T-cell (primary cell): ENCODE measurements at regions of chr6 and their contacts with region 1.

Region 1: GRCh38 chr6:30626484-30627366 is at the start of gene ATAT1:
- DNase-seq: peak; percentile 76 to 95 (median 87)
- ATAC-seq: peak; percentile 99 to 100 (median 99)
- H3K4me3 ChIP-seq: peak within 1 kb of the TSS; percentile 54 to 63
- H3K4me3 Mint-ChIP-seq: peak within 1 kb of the TSS; percentile 84 to 89 (median 87)
- H3K27ac ChIP-seq: peak within 1 kb of the TSS; percentile 81
- H3K27ac Mint-ChIP-seq: peak within 1 kb of the TSS; percentile 94
- H3K4me1 ChIP-seq: peaks cover 7 to 18% of the 10 kb centered on the region in 2 experiments
- H3K4me1 Mint-ChIP-seq: peaks cover 25 to 27% (median 26%) of the 10 kb centered on the region in 3 donors
- H3K27me3 ChIP-seq: no peaks in the 10 kb centered on the region
- H3K27me3 Mint-ChIP-seq: no peaks in the 10 kb centered on the region
- total RNA-seq, gene ATAT1: 6.9 to 11.8 (median 10.4) TPM

Region 2: DNA sequence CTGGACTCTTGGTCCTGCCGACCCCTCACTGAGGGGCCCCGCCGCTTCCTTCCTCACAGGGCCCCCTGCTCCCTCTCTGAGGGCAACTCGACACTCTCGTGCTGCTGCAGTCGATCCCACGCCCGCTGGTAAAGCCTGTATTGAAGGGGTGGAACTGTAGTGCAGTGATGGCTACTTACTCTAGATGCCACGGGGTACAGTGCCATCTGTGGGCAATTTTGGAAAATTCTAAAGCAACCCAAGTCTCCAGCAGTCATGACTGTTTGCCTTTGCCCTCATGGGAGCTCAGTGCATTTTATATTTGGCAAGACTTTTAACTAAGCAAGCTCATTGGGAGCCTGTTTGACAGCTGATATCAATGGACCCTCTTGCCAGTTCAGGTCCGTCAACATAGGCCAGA is 13.8 kb after region 1 on chr6:
- CTCF ChIA-PET with region 1: interaction called, 4 to 12 read pairs
- POLR2A ChIA-PET with region 1: no interaction called
- DNase-seq: peak in 2 of 35 experiments; percentile 5 to 22
- ATAC-seq: peak in 3 of 4 experiments; percentile 42 to 68 (median 43)
- H3K4me3 ChIP-seq: no peak overlapping the region
- H3K4me3 Mint-ChIP-seq: no peak overlapping the region
- H3K27ac ChIP-seq: no peak overlapping the region
- H3K27ac Mint-ChIP-seq: peak overlapping the region in 1 of 2 donors; percentile 61
- H3K4me1 ChIP-seq: peaks cover 10 to 17% of the 10 kb centered on the region in 2 experiments
- H3K4me1 Mint-ChIP-seq: peaks cover 15 to 20% (median 19%) of the 10 kb centered on the region in 3 donors
- H3K27me3 ChIP-seq: no peaks in the 10 kb centered on the region
- H3K27me3 Mint-ChIP-seq: no peaks in the 10 kb centered on the region

Region 3: GRCh38 chr6:30844091-30844535 is 217.4 kb after region 1 on chr6:
- CTCF ChIA-PET with region 1: no interaction called
- POLR2A ChIA-PET with region 1: no interaction called
- DNase-seq: no peak
- ATAC-seq: no peak
- H3K4me3 ChIP-seq: no peak overlapping the region
- H3K4me3 Mint-ChIP-seq: peak overlapping the region in 1 of 3 donors; percentile 65
- H3K27ac ChIP-seq: no peak overlapping the region
- H3K27ac Mint-ChIP-seq: no peak overlapping the region
- H3K4me1 ChIP-seq: peaks cover 7 to 28% of the 10 kb centered on the region in 2 experiments
- H3K4me1 Mint-ChIP-seq: peaks cover 15 to 35% (median 30%) of the 10 kb centered on the region in 3 donors
- H3K27me3 ChIP-seq: peaks cover 0 to 12% of the 10 kb centered on the region in 2 experiments
- H3K27me3 Mint-ChIP-seq: peaks cover 0 to 7% of the 10 kb centered on the region in 2 donors